ENCODE measurements at regions of chr3 and their contacts with region 1.

Region 1: GRCh38 chr3:139940622-139941021 is 5.6 kb downstream of the CLSTN2 start:
- DNase-seq: no peak
- ATAC-seq: peak in 1 of 2 donors; percentile 50

Region 2: GRCh38 chr3:139541156-139541897 is 399.3 kb before region 1 on chr3:
- intact Hi-C with region 1: no loop called
- DNase-seq: no peak
- ATAC-seq: no peak

Region 3: GRCh38 chr3:139975594-139976365 is 35.2 kb after region 1 on chr3:
- intact Hi-C with region 1: loop called in 1 of 2 experiments (anchors 2 kb)
- DNase-seq: peak; percentile 28
- ATAC-seq: peak; percentile 63 to 80

Measured in left cardiac atrium (tissue), 4 donors.